ENCODE measurements at regions of chr3 and their contacts with region 1.

Region 1: DNA sequence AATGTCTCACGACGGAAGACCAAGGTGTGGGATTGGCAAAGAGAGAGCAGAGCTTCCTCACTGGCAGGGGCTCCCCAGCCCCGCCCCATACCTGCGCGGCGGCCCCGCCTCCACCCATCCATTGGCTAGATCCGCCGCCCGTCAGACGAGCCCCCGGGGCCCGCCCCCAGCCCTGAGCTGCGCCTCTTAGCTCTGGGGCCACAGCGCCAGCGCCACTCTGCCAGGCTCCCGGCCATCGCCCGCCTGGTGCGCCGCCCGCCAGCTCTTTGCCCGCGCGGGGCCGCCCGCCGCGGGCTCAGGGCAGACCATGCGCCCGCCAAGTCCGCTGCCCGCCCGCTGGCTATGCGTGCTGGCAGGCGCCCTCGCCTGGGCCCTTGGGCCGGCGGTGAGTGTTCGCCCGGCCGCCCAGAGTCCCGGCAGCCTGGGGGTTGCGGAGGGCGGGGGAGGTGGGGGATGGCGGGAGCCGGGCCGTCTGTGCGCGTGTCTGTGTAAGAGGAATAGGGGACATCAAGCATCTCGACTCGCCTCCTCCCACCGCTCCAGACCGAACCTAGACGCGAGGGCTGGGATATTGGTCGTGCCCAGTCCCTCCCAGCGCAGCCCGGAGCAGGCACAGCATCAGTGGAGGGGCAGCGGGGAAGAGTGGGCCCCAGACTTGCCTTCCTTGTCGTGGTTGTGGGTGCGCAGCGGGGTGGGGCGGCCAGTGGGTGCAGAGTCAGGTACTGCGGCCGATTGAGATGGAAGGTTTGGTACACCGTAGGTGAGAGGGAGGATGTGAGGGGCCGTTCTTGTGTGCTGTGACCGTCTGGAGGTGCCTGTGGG is at the start of gene VIPR1:
- DNase-seq: peak; percentile 78
- H3K4me3 Mint-ChIP-seq: peak within 1 kb of the TSS; percentile 89
- H3K27ac Mint-ChIP-seq: no peak within 1 kb of the TSS
- H3K4me1 Mint-ChIP-seq: peaks cover 19% of the 10 kb centered on the region
- H3K27me3 Mint-ChIP-seq: peaks cover 42% of the 10 kb centered on the region
- total RNA-seq, gene VIPR1: 0.51 and 0.52 TPM in 2 replicates

Region 2: GRCh38 chr3:42317137-42317536 is 185.5 kb before region 1 on chr3:
- intact Hi-C with region 1: no loop called
- DNase-seq: no peak
- H3K4me3 Mint-ChIP-seq: no peak overlapping the region
- H3K27ac Mint-ChIP-seq: no peak overlapping the region
- H3K4me1 Mint-ChIP-seq: no peaks in the 10 kb centered on the region
- H3K27me3 Mint-ChIP-seq: no peaks in the 10 kb centered on the region

Region 3: GRCh38 chr3:42419563-42419962 is 83.1 kb before region 1 on chr3:
- intact Hi-C with region 1: no loop called
- DNase-seq: no peak
- H3K4me3 Mint-ChIP-seq: no peak overlapping the region
- H3K27ac Mint-ChIP-seq: no peak overlapping the region
- H3K4me1 Mint-ChIP-seq: no peaks in the 10 kb centered on the region
- H3K27me3 Mint-ChIP-seq: peaks cover 15% of the 10 kb centered on the region

Region 4: GRCh38 chr3:42526616-42527367 is 24.2 kb after region 1 on chr3:
- intact Hi-C with region 1: no loop called
- DNase-seq: peak; percentile 17
- H3K4me3 Mint-ChIP-seq: no peak overlapping the region
- H3K27ac Mint-ChIP-seq: no peak overlapping the region
- H3K4me1 Mint-ChIP-seq: peaks cover 23% of the 10 kb centered on the region
- H3K27me3 Mint-ChIP-seq: no peaks in the 10 kb centered on the region

Region 5: DNA sequence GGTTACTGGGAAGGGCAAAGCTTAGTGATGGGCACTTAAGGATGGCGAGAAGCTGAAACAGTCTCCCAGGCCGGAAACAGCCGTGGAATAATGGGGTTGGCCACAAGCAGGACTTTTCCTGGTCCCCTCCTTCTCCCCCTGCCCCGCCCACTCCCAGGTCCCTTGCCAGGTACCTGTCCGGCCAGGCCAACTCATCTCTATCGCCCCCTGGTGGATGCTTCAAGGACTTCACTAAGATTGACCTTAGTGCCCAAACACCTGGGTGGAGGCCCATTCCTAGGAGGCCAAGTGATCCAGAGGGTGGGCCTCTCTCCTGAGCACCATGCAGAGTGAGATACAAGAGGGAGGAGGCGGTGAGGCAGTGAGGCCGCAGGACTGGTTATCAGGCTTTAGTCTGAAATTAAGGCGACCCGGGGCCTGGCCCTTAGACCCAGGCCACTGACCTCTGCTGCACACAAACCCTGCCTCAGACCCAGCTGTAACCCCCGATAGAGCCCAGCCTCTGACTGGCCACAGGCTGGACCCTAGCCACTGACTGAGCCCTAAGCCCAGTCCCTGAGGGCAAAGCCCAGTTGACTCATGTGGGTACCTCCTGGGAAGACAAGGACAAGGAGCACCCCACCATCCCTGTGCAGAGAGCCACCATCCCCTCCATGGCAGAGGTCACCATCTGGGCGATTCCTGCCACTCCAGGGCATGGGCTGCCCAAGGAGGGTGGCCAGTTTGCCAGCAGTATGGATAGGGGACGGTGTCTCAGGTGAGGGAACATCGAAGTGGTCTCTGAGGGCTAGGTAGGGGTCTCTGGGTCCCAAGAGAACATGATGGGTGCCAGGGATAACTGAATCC is 37.5 kb after region 1 on chr3:
- intact Hi-C with region 1: loop called (anchors 1 kb)
- DNase-seq: peak; percentile 47
- H3K4me3 Mint-ChIP-seq: no peak overlapping the region
- H3K27ac Mint-ChIP-seq: no peak overlapping the region
- H3K4me1 Mint-ChIP-seq: peaks cover 2% of the 10 kb centered on the region
- H3K27me3 Mint-ChIP-seq: no peaks in the 10 kb centered on the region

Region 6: DNA sequence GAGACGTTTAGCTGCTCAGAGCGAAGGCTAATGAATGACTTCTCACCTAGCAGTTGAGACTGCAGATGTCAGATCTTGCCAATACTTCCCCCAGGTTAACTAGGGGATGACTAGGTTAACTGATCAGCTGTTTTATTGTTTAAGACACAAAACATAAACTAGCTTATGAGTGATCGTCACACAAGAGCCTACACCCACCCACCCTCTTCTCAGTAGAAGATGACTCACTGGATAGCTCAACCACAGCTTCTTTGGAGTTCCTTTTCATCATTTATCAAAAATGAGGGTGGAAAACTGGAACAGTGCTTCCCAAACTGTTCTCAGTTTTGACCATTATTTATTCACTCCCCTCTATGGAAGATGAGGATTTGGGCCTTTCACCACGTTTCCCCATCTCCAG is 501.6 kb after region 1 on chr3:
- intact Hi-C with region 1: no loop called
- DNase-seq: no peak
- H3K4me3 Mint-ChIP-seq: no peak overlapping the region
- H3K27ac Mint-ChIP-seq: no peak overlapping the region
- H3K4me1 Mint-ChIP-seq: no peaks in the 10 kb centered on the region
- H3K27me3 Mint-ChIP-seq: peaks cover 3% of the 10 kb centered on the region

Measured in activated T-helper 2 cell treated with anti-CD3 and anti-CD28 coated beads, Interferon-gamma antibody, Interleukin-2, Interleukin-4, amounts not matched to agents 10 μg/mL and 5 μg/mL and 100 μg/mL, durations not matched to agents 14 hours and 24 hours and 36 hours (primary cell).